B cell (primary cell): ENCODE measurements at regions of chr5 and their contacts with region 1.

Region 1: DNA sequence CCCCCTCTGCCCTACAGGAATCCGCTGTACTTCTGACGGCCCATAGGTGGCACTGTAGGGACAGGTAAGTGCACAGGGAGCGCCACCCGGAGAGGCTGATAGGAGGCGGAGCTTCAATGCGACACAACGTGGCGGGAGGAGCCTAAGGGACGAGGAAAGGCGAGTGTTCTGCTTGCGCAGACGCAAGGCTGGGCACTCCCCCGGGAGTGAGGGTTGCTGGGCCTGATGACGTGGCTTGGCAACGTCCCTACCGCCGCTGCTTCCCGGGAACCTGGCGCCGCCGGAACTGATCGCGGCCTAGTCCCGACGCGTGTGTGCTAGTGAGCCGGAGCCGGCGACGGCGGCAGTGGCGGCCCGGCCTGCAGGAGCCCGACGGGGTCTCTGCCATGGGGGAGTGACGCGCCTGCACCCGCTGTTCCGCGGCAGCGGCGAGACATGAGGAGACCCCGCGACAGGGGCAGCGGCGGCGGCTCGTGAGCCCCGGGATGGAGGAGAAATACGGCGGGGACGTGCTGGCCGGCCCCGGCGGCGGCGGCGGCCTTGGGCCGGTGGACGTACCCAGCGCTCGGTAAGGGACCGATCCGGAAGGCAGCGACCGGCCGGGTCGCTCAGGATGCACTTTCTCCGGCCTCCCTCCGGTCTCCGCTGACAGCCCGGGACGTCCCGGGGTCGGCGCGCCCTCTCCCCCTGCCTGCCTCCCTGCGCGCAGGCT is at the start of gene SLC30A5:
- DNase-seq: peak; percentile 99
- ATAC-seq: peak; percentile 99
- H3K4me3 ChIP-seq: peak within 1 kb of the TSS; percentile 83 to 90 (median 86)
- H3K4me3 Mint-ChIP-seq: peak within 1 kb of the TSS; percentile 87
- H3K27ac ChIP-seq: peak within 1 kb of the TSS; percentile 73 to 99
- H3K27ac Mint-ChIP-seq: peak within 1 kb of the TSS; percentile 86
- H3K4me1 ChIP-seq: peaks cover 11 to 14% of the 10 kb centered on the region in 2 donors
- H3K4me1 Mint-ChIP-seq: peaks cover 31% of the 10 kb centered on the region
- H3K27me3 ChIP-seq: no peaks in the 10 kb centered on the region
- H3K27me3 Mint-ChIP-seq: no peaks in the 10 kb centered on the region
- CTCF ChIP-seq: peak; percentile 80
- total RNA-seq, gene SLC30A5: 35.3 and 35.8 TPM in 2 replicates

Region 2: GRCh38 chr5:69105996-69106906 is 12.3 kb after region 1 on chr5:
- CTCF ChIA-PET with region 1: interaction called, 14 read pairs
- POLR2A ChIA-PET with region 1: no interaction called
- intact Hi-C with region 1: no loop called
- DNase-seq: peak; percentile 53
- ATAC-seq: peak; percentile 95
- H3K4me3 ChIP-seq: no peak overlapping the region
- H3K4me3 Mint-ChIP-seq: no peak overlapping the region
- H3K27ac ChIP-seq: peak overlapping the region; percentile 15 to 63
- H3K27ac Mint-ChIP-seq: peak overlapping the region; percentile 84
- H3K4me1 ChIP-seq: peaks cover 8 to 16% of the 10 kb centered on the region in 2 donors
- H3K4me1 Mint-ChIP-seq: peaks cover 18% of the 10 kb centered on the region
- H3K27me3 ChIP-seq: no peaks in the 10 kb centered on the region
- H3K27me3 Mint-ChIP-seq: no peaks in the 10 kb centered on the region
- CTCF ChIP-seq: no peak

Region 3: DNA sequence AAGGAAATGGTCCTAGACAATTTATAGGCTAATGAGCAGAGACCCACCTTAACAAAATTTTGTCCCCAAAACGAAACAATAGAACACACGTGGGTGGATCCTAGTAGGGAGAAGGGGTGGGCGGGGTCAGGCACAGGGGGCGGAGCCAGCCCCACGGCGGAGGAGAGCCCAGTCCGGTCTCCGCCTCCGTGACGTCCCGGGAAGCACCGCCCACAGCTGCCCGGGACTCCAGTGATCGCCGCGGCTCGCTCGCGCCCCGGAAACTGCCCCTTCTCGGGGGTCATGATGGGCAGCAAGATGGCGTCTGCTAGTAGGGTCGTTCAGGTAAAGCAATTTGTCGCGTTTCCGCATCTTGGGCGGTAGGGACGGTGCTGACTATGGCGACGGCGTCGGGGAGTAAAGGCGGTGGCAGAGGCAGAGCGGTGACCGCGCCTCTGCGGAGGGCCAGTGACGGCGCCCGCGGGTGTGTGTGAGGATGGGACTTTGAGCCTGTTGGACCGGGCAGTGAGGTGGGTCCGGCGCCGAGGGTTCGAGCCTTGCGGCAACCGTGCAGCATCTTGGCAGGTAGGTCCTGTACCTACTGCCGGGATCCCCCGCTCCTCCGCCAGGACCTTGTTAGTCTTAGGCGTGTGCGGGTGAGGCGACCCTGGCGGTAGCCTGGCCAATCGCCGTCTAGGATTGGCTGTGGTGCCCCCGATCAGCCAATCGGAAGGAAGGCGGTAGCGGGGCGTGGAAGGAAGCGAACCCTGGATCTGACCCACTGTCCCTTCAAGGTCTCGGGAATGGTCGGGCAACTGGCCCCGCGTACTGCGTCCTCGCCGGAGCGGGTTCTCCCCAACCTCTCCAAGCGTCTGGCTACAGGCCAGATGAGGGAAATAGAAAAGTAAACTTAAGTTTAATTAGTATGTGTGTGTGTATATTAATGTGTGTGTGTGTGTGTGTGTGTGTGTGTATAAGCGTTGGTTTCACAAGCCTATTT is 123.9 kb after region 1 on chr5:
- CTCF ChIA-PET with region 1: interaction called, 11 read pairs
- POLR2A ChIA-PET with region 1: no interaction called
- intact Hi-C with region 1: no loop called
- DNase-seq: peak; percentile 95
- ATAC-seq: peak; percentile 90
- H3K4me3 ChIP-seq: peak overlapping the region; percentile 85 to 100 (median 97)
- H3K4me3 Mint-ChIP-seq: peak overlapping the region; percentile 99
- H3K27ac ChIP-seq: peak overlapping the region; percentile 93 to 94
- H3K27ac Mint-ChIP-seq: peak overlapping the region; percentile 98
- H3K4me1 ChIP-seq: peaks cover 8 to 17% of the 10 kb centered on the region in 2 donors
- H3K4me1 Mint-ChIP-seq: peaks cover 20% of the 10 kb centered on the region
- H3K27me3 ChIP-seq: no peaks in the 10 kb centered on the region
- H3K27me3 Mint-ChIP-seq: no peaks in the 10 kb centered on the region
- CTCF ChIP-seq: no peak

Region 4: DNA sequence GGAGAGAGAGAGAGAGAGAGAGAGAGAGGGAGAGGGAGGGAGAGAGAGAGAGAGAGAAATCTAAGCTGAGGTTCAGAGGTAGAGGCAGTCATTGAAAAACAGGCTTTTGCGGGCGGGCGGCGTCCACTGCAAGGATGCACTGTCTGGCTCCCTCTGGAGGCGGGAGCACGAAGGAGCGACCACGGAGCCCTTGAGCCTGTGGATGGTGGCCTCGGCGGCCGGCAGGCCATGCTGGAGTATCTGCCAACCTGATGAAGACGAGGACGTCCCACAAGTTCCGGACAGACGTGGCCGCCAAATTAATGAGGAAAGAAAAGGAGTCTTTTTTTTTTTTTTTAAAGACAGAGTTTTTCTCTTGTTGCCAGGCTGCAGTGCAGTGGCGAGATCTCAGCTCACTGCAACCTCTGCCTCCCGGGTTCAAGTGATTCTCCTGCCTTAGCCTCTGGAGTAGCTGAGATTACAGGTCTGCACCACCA is 240.9 kb after region 1 on chr5:
- CTCF ChIA-PET with region 1: interaction called, 36 read pairs
- POLR2A ChIA-PET with region 1: interaction called, 4 read pairs
- intact Hi-C with region 1: loop called (anchors 1 kb)
- DNase-seq: peak; percentile 78
- ATAC-seq: peak; percentile 67
- H3K4me3 ChIP-seq: no peak overlapping the region
- H3K4me3 Mint-ChIP-seq: peak overlapping the region; percentile 30
- H3K27ac ChIP-seq: no peak overlapping the region
- H3K27ac Mint-ChIP-seq: peak overlapping the region; percentile 56
- H3K4me1 ChIP-seq: peaks cover 10 to 17% of the 10 kb centered on the region in 2 donors
- H3K4me1 Mint-ChIP-seq: peaks cover 15% of the 10 kb centered on the region
- H3K27me3 ChIP-seq: no peaks in the 10 kb centered on the region
- H3K27me3 Mint-ChIP-seq: no peaks in the 10 kb centered on the region
- CTCF ChIP-seq: peak; percentile 62